Activated CD4-positive, alpha-beta T cell treated with anti-CD3 and anti-CD28 coated beads for 36 hours (primary cell): ENCODE measurements at regions of chr18 and their contacts with region 1.

Region 1: GRCh38 chr18:37476182-37476581 is 89.4 kb downstream of the CELF4 start:
- DNase-seq: peak; percentile 62
- ATAC-seq: peak; percentile 33
- H3K4me3 Mint-ChIP-seq: no peak overlapping the region
- H3K27ac Mint-ChIP-seq: no peak overlapping the region
- H3K4me1 Mint-ChIP-seq: no peaks in the 10 kb centered on the region
- H3K27me3 Mint-ChIP-seq: peaks cover 7% of the 10 kb centered on the region

Region 2: GRCh38 chr18:37385846-37386778 is 90.1 kb before region 1 on chr18:
- CTCF ChIA-PET with region 1: interaction called, 3 read pairs
- POLR2A ChIA-PET with region 1: no interaction called
- intact Hi-C with region 1: loop called (anchors 1 kb)
- DNase-seq: no peak
- ATAC-seq: no peak
- H3K4me3 Mint-ChIP-seq: no peak overlapping the region
- H3K27ac Mint-ChIP-seq: no peak overlapping the region
- H3K4me1 Mint-ChIP-seq: no peaks in the 10 kb centered on the region
- H3K27me3 Mint-ChIP-seq: peaks cover 2% of the 10 kb centered on the region

Region 3: GRCh38 chr18:37419272-37419671 is 56.9 kb before region 1 on chr18:
- CTCF ChIA-PET with region 1: no interaction called
- POLR2A ChIA-PET with region 1: no interaction called
- intact Hi-C with region 1: no loop called
- DNase-seq: no peak
- ATAC-seq: no peak
- H3K4me3 Mint-ChIP-seq: no peak overlapping the region
- H3K27ac Mint-ChIP-seq: no peak overlapping the region
- H3K4me1 Mint-ChIP-seq: no peaks in the 10 kb centered on the region
- H3K27me3 Mint-ChIP-seq: no peaks in the 10 kb centered on the region

Region 4: GRCh38 chr18:37493352-37493935 is 17.3 kb after region 1 on chr18:
- CTCF ChIA-PET with region 1: no interaction called
- POLR2A ChIA-PET with region 1: no interaction called
- intact Hi-C with region 1: loop called in 1 of 2 experiments (anchors 2 kb)
- DNase-seq: no peak
- ATAC-seq: no peak
- H3K4me3 Mint-ChIP-seq: no peak overlapping the region
- H3K27ac Mint-ChIP-seq: no peak overlapping the region
- H3K4me1 Mint-ChIP-seq: no peaks in the 10 kb centered on the region
- H3K27me3 Mint-ChIP-seq: peaks cover 16% of the 10 kb centered on the region